ENCODE measurements at regions of chr13 and their contacts with region 1.

Region 1: GRCh38 chr13:109331898-109332297 is 454.5 kb downstream of the IRS2 start:
- DNase-seq: peak in 1 of 2 experiments; percentile 44
- H3K4me3 ChIP-seq: no peak overlapping the region
- H3K4me3 Mint-ChIP-seq: no peak overlapping the region
- H3K27ac Mint-ChIP-seq: no peak overlapping the region
- H3K4me1 ChIP-seq: peaks cover 8% of the 10 kb centered on the region; the same call in 1 of the 2 replicates
- H3K4me1 Mint-ChIP-seq: peaks cover 5% of the 10 kb centered on the region
- H3K27me3 ChIP-seq: no peaks in the 10 kb centered on the region
- H3K27me3 Mint-ChIP-seq: no peaks in the 10 kb centered on the region
- CTCF ChIP-seq: no peak

Region 2: DNA sequence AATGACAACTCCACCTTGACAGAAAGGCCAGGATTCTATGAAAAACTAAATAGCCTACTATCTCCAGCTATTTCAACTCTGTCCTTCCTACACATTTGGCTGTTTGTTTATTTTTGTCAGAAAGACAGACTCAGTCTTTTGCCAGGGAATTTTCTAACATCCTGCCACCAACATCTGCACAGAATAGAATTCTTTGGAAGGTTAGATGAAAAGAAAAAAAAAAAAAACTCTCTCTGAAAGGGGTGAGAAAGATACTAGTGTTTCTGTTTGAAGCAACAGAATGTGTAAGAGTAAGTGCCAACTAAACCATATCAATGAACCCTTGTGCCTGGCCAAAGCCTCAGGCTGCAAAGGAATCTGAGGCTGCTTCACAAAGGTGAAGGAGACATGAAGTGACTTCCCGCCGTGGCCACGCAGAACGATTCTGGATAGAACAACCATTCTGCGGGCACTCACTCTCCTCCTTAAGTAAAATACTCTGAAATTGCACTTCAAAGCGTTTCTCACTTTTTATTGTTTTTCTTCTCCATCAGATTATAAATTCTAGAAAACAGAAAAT is 43.7 kb before region 1 on chr13:
- CTCF ChIA-PET with region 1: interaction called, 12 read pairs
- POLR2A ChIA-PET with region 1: no interaction called
- intact Hi-C with region 1: no loop called
- DNase-seq: no peak
- H3K4me3 ChIP-seq: no peak overlapping the region
- H3K4me3 Mint-ChIP-seq: no peak overlapping the region
- H3K27ac Mint-ChIP-seq: no peak overlapping the region
- H3K4me1 ChIP-seq: no peaks in the 10 kb centered on the region
- H3K4me1 Mint-ChIP-seq: peaks cover 8% of the 10 kb centered on the region
- H3K27me3 ChIP-seq: no peaks in the 10 kb centered on the region
- H3K27me3 Mint-ChIP-seq: no peaks in the 10 kb centered on the region
- CTCF ChIP-seq: no peak

Measured in Caco-2 (cell line).